ENCODE measurements at regions of chr2 and their contacts with region 1.

Region 1: GRCh38 chr2:47058003-47058931 is 96.8 kb downstream of the STPG4 start:
- DNase-seq: peak; percentile 69 to 85
- ATAC-seq: peak; percentile 48 to 64
- H3K4me3 ChIP-seq: no peak overlapping the region
- H3K27ac ChIP-seq: peak overlapping the region; percentile 84 to 93 (median 89)
- H3K4me1 ChIP-seq: peaks cover 77 to 80% of the 10 kb centered on the region in 2 donors
- H3K27me3 ChIP-seq: no peaks in the 10 kb centered on the region
- CTCF ChIP-seq: no peak
- POLR2A ChIP-seq: no peak

Region 2: DNA sequence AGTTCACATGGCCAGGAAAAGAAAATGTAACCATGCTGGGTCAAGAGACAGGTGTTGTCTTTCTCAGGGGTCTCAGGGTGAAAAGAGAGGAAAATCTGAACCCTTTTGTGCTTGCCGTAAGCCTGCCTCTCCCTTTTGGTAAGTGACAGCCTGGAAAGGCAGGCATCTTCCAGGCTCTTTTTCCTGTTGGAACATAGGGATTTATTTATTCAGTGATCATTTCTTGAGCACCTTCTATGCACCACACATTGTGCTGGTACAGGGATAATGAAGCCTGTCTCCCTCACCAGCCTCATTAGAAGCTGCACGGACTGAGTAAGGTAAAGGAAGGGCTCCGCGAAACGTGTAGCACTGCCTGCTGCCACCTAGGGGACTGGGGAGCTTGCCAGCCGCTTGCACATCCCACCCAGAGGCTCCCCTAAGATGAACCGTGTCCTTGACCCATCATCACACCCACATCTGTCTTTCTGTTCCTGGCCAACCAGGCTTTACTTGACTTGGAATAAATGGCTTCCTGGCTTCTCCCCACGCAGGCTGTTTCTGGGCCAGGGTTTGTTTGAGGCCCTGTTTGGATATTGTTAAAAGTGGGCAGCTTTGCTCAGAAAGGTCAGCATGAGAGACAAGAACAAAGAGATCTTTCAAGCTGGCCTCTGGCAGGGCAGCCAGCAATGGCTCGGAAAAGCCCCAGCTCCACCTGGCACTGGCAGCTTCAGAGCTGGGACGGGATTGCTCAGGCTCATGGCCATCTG is 69.4 kb before region 1 on chr2:
- in situ Hi-C with region 1: no loop called
- intact Hi-C with region 1: loop called (anchors 2 kb)
- DNase-seq: no peak
- ATAC-seq: peak in 1 of 2 donors; percentile 13
- H3K4me3 ChIP-seq: no peak overlapping the region
- H3K27ac ChIP-seq: peak overlapping the region in 3 of 4 donors; percentile 27 to 65 (median 61)
- H3K4me1 ChIP-seq: peaks cover 42 to 47% of the 10 kb centered on the region in 2 donors
- H3K27me3 ChIP-seq: no peaks in the 10 kb centered on the region
- CTCF ChIP-seq: no peak
- POLR2A ChIP-seq: no peak

Region 3: DNA sequence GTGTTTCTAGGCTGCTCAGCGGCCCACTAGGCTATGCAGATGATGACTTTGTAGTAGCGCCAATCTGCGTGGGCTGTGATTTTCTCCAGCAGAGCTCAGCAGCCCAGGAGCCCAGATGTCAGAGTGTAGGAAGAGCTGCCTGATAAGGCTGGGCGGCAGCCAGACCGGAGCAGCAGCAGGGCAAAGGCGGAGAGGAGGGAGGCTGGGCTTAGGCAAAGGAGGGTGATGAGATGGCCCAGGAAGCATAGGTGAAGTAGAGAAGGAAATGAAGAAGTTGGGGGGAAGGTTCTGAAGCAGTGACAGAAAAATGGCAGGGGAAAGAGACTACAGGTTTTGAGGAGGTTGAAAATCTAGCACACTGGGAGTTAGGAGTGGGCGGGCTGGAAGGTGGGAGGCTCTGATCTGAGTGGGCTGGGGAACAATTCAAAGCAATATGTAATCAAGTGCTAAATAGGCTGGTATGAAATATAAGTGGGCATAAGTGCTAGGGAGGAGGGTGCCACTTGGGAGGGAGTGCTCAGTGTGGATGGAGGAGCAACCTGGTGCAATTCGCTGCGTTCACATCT is 147.4 kb after region 1 on chr2:
- in situ Hi-C with region 1: no loop called
- intact Hi-C with region 1: no loop called
- DNase-seq: no peak
- ATAC-seq: no peak
- H3K4me3 ChIP-seq: no peak overlapping the region
- H3K27ac ChIP-seq: no peak overlapping the region
- H3K4me1 ChIP-seq: no peaks in the 10 kb centered on the region
- H3K27me3 ChIP-seq: no peaks in the 10 kb centered on the region
- CTCF ChIP-seq: no peak
- POLR2A ChIP-seq: no peak